Posterior vena cava (tissue), 2 donors: ENCODE measurements at regions of chr11 and their contacts with region 1.

Region 1: DNA sequence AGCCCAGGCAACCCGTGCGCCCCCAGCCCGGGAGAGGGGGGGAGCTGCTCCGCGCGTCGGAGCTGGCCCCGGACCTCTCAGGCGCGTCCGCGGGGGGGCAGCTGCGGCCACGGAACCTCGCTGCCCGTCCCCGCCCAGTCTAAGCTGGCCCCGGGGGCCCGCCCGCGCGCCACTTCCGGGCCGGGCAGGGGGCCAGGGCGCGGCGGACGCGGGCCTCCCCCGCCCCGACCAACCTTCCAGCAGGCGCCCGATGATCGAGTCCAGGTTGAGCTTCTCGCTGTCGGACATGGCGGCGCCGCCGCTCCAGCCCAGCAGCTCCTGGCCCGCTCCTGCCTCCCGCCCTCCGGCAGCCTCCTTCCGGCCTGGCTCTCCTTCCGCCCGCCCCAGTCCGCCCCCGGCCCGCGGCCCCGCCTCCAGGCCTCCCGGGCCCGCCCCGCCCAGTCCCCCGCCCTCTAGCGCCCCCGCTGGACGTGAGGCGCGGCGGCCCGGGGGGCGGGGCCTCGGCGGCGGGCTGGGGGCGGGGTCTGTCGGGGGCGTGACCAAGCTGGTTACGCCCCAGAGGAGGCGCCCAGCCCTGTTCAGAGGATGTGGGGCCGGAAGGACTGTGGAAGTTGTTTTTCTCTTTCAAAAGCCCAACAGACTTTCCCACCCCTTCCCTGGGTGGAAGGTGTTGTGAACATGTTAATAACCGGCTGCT is at the start of gene PPP1CA:
- DNase-seq: peak; percentile 97
- total RNA-seq, gene PPP1CA: 62.1 to 70.6 TPM

Region 2: DNA sequence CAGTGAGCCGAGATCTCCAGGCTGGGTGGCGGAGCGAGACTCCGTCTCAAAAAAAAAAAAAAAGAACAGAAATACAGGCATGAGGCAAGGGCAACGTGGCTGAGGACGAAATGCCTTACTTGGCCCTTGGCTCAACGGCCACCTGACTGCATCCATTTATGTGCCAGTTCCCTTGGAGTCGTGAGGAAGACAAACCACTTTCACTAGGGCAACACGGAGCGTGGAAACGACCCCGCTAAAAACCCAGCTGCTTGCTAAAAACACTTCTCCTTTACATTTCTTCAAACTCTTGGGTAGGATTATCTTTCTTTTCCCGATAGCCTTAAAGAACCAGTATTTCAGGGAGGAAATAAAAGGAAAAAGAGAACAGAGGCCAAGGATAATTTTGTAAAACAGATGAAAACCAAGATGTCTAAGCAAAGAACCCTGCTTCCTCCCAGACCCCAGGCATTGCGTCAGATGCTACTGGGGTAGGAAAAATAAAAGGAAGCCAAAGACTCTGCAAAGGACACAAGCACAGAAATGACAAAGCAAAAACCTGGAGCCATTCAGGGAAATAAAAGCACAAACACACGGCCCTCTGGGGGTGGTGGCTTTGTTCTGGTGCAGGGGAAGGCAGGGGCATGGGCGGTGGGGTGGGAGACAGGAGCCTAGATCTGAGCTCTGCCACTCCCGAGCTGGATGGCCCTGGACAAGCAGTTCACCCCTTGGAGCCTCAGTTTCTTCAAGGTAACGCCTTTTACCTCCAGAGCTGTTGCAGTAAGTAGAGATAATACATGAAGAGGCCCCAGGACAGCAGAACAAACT is 480.5 kb before region 1 on chr11:
- intact Hi-C with region 1: loop called in 1 of 2 experiments (anchors 5 kb)
- DNase-seq: no peak

Region 3: GRCh38 chr11:67303132-67303834 is 98.4 kb before region 1 on chr11 and contains the start of gene SSH3:
- intact Hi-C with region 1: no loop called
- DNase-seq: peak; percentile 91
- total RNA-seq, gene SSH3: 23.5 to 26.2 TPM

Region 4: GRCh38 chr11:67507864-67508485 is 106.3 kb after region 1 on chr11 and contains the start of gene CDK2AP2:
- intact Hi-C with region 1: loop called in 1 of 2 experiments (anchors 10 kb)
- DNase-seq: peak; percentile 100
- total RNA-seq, gene CDK2AP2: 39.7 to 40.0 TPM